ENCODE measurements at regions of chr7 and their contacts with region 1.

Region 1: DNA sequence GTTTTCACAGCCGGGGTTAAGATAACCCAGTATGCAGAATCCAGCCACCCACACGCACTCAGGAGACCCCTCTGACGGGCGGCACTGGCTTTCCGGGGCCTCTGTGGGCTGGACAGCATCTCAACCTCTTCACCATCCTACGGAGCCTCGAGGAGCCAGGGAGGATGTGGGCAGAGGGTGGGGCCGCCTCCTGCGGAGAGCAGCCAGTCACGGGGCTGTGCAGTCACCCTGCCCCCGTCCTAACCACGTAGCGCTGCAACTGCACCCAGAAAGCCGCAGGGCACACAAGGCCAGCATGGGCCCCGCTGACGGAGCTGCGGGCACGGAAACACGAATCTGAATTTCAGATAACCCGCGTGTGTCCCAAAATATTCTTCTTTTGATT is 270.3 kb downstream of the ELFN1 start:
- DNase-seq: peak; percentile 86 to 97 (median 90)
- ATAC-seq: peak; percentile 83
- H3K4me3 ChIP-seq: peak overlapping the region; percentile 85
- H3K4me3 Mint-ChIP-seq: peak overlapping the region; percentile 99
- H3K27ac ChIP-seq: peak overlapping the region; percentile 91 to 96
- H3K27ac Mint-ChIP-seq: peak overlapping the region; percentile 100
- H3K4me1 ChIP-seq: peaks cover 89% of the 10 kb centered on the region
- H3K4me1 Mint-ChIP-seq: peaks cover 66% of the 10 kb centered on the region
- H3K27me3 ChIP-seq: no peaks in the 10 kb centered on the region
- H3K27me3 Mint-ChIP-seq: peaks cover 4% of the 10 kb centered on the region
- CTCF ChIP-seq: no peak

Region 2: GRCh38 chr7:1872191-1873069 is 68.0 kb before region 1 on chr7:
- CTCF ChIA-PET with region 1: no interaction called
- POLR2A ChIA-PET with region 1: no interaction called
- intact Hi-C with region 1: no loop called
- DNase-seq: no peak
- ATAC-seq: no peak
- H3K4me3 ChIP-seq: no peak overlapping the region
- H3K4me3 Mint-ChIP-seq: no peak overlapping the region
- H3K27ac ChIP-seq: no peak overlapping the region
- H3K27ac Mint-ChIP-seq: no peak overlapping the region
- H3K4me1 ChIP-seq: peaks cover 16% of the 10 kb centered on the region
- H3K4me1 Mint-ChIP-seq: peaks cover 34% of the 10 kb centered on the region
- H3K27me3 ChIP-seq: no peaks in the 10 kb centered on the region
- H3K27me3 Mint-ChIP-seq: no peaks in the 10 kb centered on the region
- CTCF ChIP-seq: no peak

Region 3: DNA sequence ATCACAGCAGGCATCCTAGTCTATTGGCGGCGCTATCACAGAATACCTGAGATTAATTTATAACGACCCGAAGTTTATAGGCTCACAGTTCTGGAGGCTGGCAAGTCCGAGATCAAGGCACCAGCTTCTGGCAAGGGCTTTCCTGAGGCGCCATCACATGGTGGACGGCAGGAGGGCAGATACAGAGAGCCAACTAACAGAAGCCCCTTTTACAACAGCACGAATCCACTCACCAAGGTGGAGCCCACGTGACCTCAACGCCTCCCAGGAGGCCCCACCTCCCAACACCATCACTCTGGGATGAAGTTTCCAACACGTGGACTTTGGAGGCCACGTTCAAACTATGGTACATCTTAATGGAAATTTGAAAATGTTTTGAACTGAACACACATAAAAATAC is 15.0 kb before region 1 on chr7:
- CTCF ChIA-PET with region 1: no interaction called
- POLR2A ChIA-PET with region 1: interaction called, 206 read pairs
- intact Hi-C with region 1: loop called (anchors 1 kb)
- DNase-seq: peak in 3 of 14 experiments; percentile 26 to 46 (median 27)
- ATAC-seq: no peak
- H3K4me3 ChIP-seq: peak overlapping the region; percentile 19
- H3K4me3 Mint-ChIP-seq: peak overlapping the region; percentile 67
- H3K27ac ChIP-seq: peak overlapping the region; percentile 25 to 76
- H3K27ac Mint-ChIP-seq: peak overlapping the region; percentile 89
- H3K4me1 ChIP-seq: peaks cover 78% of the 10 kb centered on the region
- H3K4me1 Mint-ChIP-seq: peaks cover 84% of the 10 kb centered on the region
- H3K27me3 ChIP-seq: no peaks in the 10 kb centered on the region
- H3K27me3 Mint-ChIP-seq: no peaks in the 10 kb centered on the region
- CTCF ChIP-seq: peak; percentile 26

Region 4: DNA sequence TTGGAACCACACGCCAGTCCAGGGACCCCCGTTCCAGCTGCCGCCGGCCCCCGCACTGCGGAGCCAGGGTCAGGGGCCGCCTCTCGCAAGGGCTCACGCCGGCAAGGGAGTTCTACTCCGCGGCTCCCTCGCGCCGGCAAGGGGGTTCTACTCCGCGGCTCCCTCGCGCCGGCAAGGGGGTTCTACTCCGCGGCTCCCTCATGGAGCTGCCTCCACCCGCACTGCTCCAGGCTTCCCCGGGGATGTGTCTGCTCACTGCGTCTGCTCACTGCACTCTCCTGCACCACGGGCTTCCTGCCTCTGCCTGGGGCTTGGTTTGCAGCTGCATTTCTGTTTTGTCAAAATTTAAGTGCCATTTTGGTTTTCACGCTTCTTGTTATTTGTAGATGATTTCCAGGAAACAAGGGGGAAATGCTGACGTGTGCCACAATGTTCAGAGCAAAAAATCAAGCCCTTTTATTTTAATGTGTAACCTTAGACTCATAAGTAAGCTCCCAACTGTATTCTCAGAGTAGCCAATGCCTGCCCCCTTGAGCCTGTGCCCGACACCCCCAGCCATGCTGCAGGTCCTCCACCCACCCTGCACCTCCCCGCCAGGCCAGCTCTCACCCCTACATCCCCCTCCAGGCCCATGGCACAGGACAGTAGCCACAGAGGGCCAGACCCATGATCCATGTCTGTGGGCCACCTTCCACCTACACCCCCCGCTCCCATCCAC is 46.1 kb after region 1 on chr7:
- CTCF ChIA-PET with region 1: no interaction called
- POLR2A ChIA-PET with region 1: interaction called, 13 read pairs
- intact Hi-C with region 1: no loop called
- DNase-seq: peak in 8 of 14 experiments; percentile 11 to 77 (median 42)
- ATAC-seq: peak; percentile 87
- H3K4me3 ChIP-seq: no peak overlapping the region
- H3K4me3 Mint-ChIP-seq: peak overlapping the region; percentile 69
- H3K27ac ChIP-seq: no peak overlapping the region
- H3K27ac Mint-ChIP-seq: peak overlapping the region; percentile 91
- H3K4me1 ChIP-seq: peaks cover 35% of the 10 kb centered on the region
- H3K4me1 Mint-ChIP-seq: peaks cover 38% of the 10 kb centered on the region
- H3K27me3 ChIP-seq: no peaks in the 10 kb centered on the region
- H3K27me3 Mint-ChIP-seq: no peaks in the 10 kb centered on the region
- CTCF ChIP-seq: no peak

Region 5: DNA sequence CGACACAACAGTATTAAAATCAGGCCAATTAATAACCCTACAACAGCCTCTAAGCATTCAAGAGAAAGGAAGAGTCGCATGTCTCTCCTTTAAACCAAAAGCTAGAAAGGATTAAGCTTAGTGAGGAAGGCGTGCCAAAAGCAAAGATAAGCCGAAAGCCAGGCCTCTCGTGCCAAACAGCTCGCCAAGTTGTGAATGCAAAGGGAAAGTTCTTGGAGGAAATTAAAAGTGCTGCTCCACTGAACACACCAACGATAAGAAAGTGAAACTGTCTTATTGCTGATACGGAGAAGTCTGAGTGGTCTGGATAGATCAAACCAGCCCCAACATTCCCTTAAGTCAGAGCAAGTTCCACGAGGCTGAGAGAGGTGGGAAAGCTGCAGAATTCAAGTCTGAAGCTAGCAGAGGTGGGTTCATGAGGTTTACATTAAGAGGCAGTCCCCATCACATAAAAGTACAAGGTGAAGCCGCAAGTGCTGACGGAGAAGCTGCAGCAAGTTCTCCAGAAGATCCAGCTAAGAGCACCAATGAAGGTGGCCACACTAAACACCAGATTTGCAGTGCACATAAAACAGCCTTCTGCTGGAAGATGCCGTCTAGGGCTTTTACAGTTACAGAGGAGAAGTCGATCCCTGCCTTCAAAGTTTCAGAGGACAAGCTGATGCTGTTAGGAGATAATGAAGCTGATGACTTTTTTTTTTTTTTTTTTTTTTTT is 97.6 kb after region 1 on chr7:
- CTCF ChIA-PET with region 1: no interaction called
- POLR2A ChIA-PET with region 1: interaction called, 33 read pairs
- intact Hi-C with region 1: loop called in 1 of 2 experiments (anchors 2 kb)
- DNase-seq: peak in 7 of 14 experiments; percentile 14 to 57 (median 31)
- ATAC-seq: peak; percentile 41
- H3K4me3 ChIP-seq: peak overlapping the region; percentile 65
- H3K4me3 Mint-ChIP-seq: peak overlapping the region; percentile 80
- H3K27ac ChIP-seq: peak overlapping the region; percentile 23 to 58
- H3K27ac Mint-ChIP-seq: peak overlapping the region; percentile 86
- H3K4me1 ChIP-seq: peaks cover 34% of the 10 kb centered on the region
- H3K4me1 Mint-ChIP-seq: peaks cover 66% of the 10 kb centered on the region
- H3K27me3 ChIP-seq: no peaks in the 10 kb centered on the region
- H3K27me3 Mint-ChIP-seq: no peaks in the 10 kb centered on the region
- CTCF ChIP-seq: no peak

Region 6: GRCh38 chr7:2651336-2651735 is 710.9 kb after region 1 on chr7:
- CTCF ChIA-PET with region 1: no interaction called
- POLR2A ChIA-PET with region 1: no interaction called
- intact Hi-C with region 1: no loop called
- DNase-seq: no peak
- ATAC-seq: no peak
- H3K4me3 ChIP-seq: no peak overlapping the region
- H3K4me3 Mint-ChIP-seq: no peak overlapping the region
- H3K27ac ChIP-seq: no peak overlapping the region
- H3K27ac Mint-ChIP-seq: no peak overlapping the region
- H3K4me1 ChIP-seq: no peaks in the 10 kb centered on the region
- H3K4me1 Mint-ChIP-seq: no peaks in the 10 kb centered on the region
- H3K27me3 ChIP-seq: no peaks in the 10 kb centered on the region
- H3K27me3 Mint-ChIP-seq: no peaks in the 10 kb centered on the region
- CTCF ChIP-seq: no peak

Measured in CD4-positive, alpha-beta T cell (primary cell).